Endothelial cell of umbilical vein (primary cell): ENCODE measurements at regions of chr12 and their contacts with region 1.

Region 1: GRCh38 chr12:79844693-79845092 is 90.2 kb downstream of the PPP1R12A start:
- DNase-seq: peak; percentile 95
- H3K4me3 ChIP-seq: no peak overlapping the region
- H3K27ac ChIP-seq: peak overlapping the region; percentile 65
- H3K4me1 ChIP-seq: peaks cover 58% of the 10 kb centered on the region
- H3K27me3 ChIP-seq: no peaks in the 10 kb centered on the region
- CTCF ChIP-seq: no peak
- POLR2A ChIP-seq: peak; percentile 13

Region 2: GRCh38 chr12:79555028-79555930 is 289.4 kb before region 1 on chr12:
- CTCF ChIA-PET with region 1: no interaction called
- POLR2A ChIA-PET with region 1: no interaction called
- dilution Hi-C with region 1: no loop called
- intact Hi-C with region 1: loop called (anchors 10 kb)
- DNase-seq: peak; percentile 79
- H3K4me3 ChIP-seq: no peak overlapping the region
- H3K27ac ChIP-seq: no peak overlapping the region
- H3K4me1 ChIP-seq: peaks cover 56% of the 10 kb centered on the region
- H3K27me3 ChIP-seq: no peaks in the 10 kb centered on the region
- CTCF ChIP-seq: peak; percentile 43 to 48
- POLR2A ChIP-seq: no peak

Region 3: DNA sequence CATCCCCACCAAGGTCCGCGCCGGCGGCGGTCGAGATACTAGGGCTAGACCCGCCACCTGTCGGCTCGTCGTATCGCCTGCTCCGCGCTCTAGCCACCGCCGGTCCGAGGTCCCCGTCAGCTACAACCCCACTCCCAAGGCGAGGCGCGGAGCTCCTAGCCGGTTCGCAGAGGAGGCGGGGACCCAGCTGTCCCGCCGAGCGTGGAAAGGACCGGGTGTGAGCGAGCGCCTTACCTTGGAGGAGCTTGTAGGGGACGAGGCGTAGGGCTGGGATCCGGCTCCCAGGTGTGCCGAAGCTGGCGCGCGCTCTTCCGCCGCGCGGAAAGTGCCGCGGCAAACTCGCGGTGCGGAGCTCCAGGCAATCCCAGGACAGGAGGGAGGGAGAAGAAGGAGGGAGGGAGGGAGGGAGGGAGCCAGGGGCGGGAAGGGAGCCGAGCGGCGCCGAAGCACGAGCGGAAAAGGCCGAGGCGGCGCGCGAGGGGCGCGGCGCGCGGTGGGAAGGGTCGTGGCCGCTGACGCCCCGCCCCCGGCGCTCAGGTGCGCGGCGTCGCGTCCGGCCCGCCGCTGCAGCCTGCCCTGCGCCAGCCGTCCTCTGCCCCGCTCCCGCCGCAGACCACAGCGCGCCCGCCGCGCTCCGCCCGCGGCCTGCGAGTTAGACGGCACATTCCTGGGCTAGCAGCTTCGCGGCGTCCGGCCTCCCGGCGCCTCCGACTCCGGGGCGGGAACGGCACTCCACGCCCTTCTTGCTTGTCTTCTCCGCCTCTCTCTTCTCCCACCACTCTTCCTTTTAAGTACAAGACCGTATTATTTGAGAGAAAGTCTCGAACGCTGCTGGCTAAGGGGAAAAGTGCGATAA is 153.8 kb before region 1 on chr12 and contains the start of gene PAWR:
- CTCF ChIA-PET with region 1: no interaction called
- POLR2A ChIA-PET with region 1: interaction called, 3 read pairs
- dilution Hi-C with region 1: no loop called
- intact Hi-C with region 1: loop called (anchors 5 kb)
- DNase-seq: peak; percentile 83
- H3K4me3 ChIP-seq: peak within 1 kb of the TSS; percentile 85 to 96 (median 88)
- H3K27ac ChIP-seq: peak within 1 kb of the TSS; percentile 85
- H3K4me1 ChIP-seq: peaks cover 28% of the 10 kb centered on the region
- H3K27me3 ChIP-seq: no peaks in the 10 kb centered on the region
- CTCF ChIP-seq: peak in 1 of 2 donors; percentile 37
- POLR2A ChIP-seq: peak; percentile 21
- total RNA-seq, gene PAWR: 154 and 175 TPM in 2 replicates

Region 4: GRCh38 chr12:79886917-79887519 is 42.3 kb after region 1 on chr12:
- CTCF ChIA-PET with region 1: interaction called, 12 read pairs
- POLR2A ChIA-PET with region 1: no interaction called
- dilution Hi-C with region 1: no loop called
- intact Hi-C with region 1: no loop called
- DNase-seq: peak; percentile 77
- H3K4me3 ChIP-seq: no peak overlapping the region
- H3K27ac ChIP-seq: peak overlapping the region; percentile 3
- H3K4me1 ChIP-seq: peaks cover 30% of the 10 kb centered on the region
- H3K27me3 ChIP-seq: no peaks in the 10 kb centered on the region
- CTCF ChIP-seq: peak; percentile 33 to 39
- POLR2A ChIP-seq: no peak

Region 5: GRCh38 chr12:80056845-80057244 is 212.2 kb after region 1 on chr12:
- CTCF ChIA-PET with region 1: no interaction called
- POLR2A ChIA-PET with region 1: no interaction called
- dilution Hi-C with region 1: no loop called
- intact Hi-C with region 1: loop called (anchors 5 kb)
- DNase-seq: peak; percentile 98
- H3K4me3 ChIP-seq: no peak overlapping the region
- H3K27ac ChIP-seq: no peak overlapping the region
- H3K4me1 ChIP-seq: peaks cover 15% of the 10 kb centered on the region
- H3K27me3 ChIP-seq: peaks cover 0 to 2% of the 10 kb centered on the region in 2 experiments
- CTCF ChIP-seq: no peak
- POLR2A ChIP-seq: no peak